Posterior vena cava (tissue), 2 donors: ENCODE measurements at regions of chr1 and their contacts with region 1.

Region 1: GRCh38 chr1:39110325-39110851 is 84.2 kb downstream of the NDUFS5 start:
- DNase-seq: no peak

Region 2: DNA sequence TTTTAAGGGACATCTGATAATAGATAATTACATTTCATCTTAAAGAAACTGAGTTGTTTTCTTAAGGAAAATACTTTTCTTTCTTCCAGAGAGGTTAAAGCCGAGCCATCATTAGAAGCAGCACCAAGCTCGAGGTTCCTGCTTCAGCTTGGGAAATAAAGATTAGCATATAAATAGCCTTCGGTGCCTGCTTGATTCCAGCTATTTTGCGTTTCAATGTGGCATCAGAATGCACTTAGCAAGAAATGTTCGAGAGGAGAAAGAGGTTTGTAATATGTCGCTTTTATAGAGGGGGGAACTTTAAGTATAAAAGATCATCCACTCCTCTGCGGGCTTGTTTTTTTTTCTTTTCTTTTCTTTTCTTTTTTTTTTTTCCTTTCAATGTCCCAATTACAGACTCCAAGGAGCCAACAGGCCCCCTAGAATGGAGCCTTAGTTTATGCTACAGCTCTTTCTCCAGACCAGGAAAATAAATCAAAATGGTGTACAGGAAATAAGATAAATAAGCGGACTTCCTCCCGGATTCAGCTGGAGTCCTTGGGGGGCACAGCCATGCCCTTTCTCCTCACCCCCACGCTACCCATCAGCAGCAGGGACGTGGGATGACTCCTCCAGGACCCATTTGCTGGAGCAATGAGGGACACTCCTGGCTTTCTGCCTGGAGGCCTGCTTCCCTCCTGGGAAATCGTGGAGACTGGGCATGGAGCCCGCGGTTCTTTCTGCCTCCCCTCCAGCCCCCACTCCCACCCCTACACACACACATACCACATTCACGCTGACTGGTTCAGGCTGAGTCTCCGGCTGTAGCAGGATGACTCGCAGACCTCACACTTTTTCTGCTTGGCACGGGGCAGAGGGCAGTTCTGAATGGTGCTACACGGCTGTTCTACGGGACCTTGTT is 382.5 kb before region 1 on chr1:
- intact Hi-C with region 1: no loop called
- DNase-seq: peak; percentile 86

Region 3: DNA sequence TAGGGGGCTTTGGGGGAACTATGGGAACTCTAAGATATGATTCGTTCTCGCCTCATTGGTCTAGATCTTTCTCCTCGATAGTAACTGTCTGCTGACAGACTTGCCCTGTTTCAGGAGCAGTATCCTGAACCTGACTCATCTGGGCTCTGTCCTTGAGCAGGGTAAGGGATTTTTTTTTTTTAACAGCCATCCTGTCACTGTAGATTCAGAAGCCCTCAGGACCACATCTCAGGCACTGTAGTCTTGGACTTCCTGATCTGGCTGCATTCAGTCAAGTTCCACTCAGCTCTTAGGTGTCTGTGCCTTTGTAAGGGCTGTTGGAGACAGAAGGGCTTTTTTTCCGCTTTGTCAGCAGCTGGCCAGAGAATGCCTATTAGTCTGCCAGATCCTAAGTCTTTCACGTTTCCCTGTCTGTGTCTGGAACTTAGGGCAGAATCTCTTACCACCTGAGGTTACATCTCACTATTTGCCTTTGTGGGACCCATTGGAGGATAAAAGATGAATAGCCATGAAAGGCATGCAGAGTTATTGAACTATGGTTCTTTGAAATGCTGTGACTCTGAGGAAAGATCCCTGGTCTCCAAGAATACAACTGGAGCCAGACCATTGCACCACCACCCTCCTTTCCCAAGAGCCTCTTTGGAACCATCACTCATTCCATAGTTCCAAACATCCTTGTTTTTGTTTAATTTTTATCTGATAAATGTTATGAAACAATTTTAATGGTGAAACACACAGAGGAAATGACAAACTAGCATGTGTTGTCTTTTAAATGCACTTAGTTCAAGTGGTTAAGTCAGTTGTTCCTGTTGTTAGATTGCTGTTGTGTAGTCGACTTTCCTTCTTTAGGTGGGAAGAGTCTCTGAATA is 44.4 kb after region 1 on chr1:
- intact Hi-C with region 1: loop called in 1 of 2 experiments (anchors 5 kb)
- DNase-seq: no peak